ENCODE measurements at regions of chr1 and their contacts with region 1.

Region 1: GRCh38 chr1:54950369-54951163 is 29.9 kb upstream of the TMEM61 start:
- H3K4me3 ChIP-seq: no peak overlapping the region
- H3K27ac ChIP-seq: 0 out of 2 replicates have a peak overlapping the region, but pooled peaks have one; percentile 0
- H3K4me1 ChIP-seq: no peaks in the 10 kb centered on the region
- CTCF ChIP-seq: peak; percentile 78

Region 2: DNA sequence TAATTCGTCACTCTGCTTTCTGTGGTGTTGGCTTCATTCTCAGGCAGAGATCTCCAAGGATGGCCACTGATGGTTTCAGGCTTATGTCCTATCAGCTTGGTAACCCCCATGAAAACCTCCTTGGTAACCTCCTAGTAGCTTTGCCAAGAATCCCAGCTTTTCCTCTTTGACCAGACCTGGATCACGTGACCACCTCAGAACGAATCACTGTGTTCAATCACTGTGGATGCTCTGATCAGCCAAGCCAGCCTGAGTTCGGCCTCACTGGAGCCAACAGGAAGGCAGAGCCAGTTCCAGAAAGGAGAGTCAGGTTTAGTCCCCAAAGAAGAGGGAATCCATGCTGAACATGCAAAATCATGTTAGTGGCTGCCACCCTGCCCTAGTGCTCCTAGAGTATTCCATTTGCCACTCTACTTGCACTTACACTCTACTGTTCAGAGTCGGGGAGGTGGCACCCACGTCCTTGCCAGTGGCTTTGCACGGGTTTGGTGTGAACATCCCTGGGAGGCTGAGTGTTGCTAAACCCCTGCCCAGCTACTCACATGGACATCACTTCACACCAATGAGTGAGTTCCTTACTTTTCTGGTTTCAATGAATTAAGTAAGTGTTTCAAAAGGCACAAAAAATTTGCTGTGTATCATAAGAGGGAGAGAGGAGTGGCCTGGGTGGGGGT is 510.9 kb before region 1 on chr1:
- CTCF ChIA-PET with region 1: no interaction called
- POLR2A ChIA-PET with region 1: no interaction called
- H3K4me3 ChIP-seq: no peak overlapping the region
- H3K27ac ChIP-seq: no peak overlapping the region
- H3K4me1 ChIP-seq: no peaks in the 10 kb centered on the region
- CTCF ChIP-seq: no peak

Region 3: GRCh38 chr1:54965624-54966340 is 15.2 kb after region 1 on chr1:
- CTCF ChIA-PET with region 1: interaction called, 18 read pairs
- POLR2A ChIA-PET with region 1: no interaction called
- H3K4me3 ChIP-seq: no peak overlapping the region
- H3K27ac ChIP-seq: no peak overlapping the region
- H3K4me1 ChIP-seq: no peaks in the 10 kb centered on the region
- CTCF ChIP-seq: no peak

Region 4: DNA sequence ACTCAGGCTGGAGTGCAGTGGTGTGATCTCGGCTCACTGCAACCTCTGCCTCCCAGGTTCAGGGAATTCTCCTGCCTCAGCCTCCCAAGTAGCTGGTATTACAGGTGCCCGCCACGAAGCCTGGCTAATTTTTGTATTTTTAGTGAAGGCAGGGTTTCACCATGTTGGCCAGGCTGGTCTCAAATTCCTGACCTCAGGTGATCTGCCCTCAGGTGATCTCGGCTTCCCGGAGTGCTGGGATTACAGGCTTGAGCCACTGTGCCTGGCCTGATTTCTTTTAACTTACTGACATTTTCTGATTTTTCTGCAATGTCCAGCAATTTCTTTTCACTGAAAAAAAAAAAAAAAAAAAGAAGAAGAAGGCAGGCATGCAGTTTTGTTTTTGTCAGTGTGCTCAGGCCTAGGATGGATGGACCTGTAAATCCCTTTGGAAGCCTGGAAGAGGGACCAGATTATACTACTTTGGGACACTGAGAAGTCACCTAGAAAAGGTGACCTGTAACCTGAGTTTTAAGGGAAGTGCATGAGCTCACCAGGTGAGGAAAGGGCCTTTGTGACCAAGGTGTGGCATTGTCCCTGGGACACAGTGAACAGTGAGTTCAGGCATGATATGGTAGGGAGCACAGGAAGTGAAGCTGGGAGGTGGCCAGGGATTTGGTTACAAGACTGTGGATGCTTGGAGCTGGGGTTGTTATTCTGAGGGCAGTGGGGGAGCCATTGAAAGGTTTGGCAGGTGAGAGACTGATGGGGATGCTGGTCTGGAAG is 27.1 kb after region 1 on chr1:
- CTCF ChIA-PET with region 1: interaction called, 16 read pairs
- POLR2A ChIA-PET with region 1: interaction called, 3 read pairs
- H3K4me3 ChIP-seq: no peak overlapping the region
- H3K27ac ChIP-seq: no peak overlapping the region
- H3K4me1 ChIP-seq: no peaks in the 10 kb centered on the region; the same call in 1 of the 2 replicates
- CTCF ChIP-seq: no peak

Region 5: DNA sequence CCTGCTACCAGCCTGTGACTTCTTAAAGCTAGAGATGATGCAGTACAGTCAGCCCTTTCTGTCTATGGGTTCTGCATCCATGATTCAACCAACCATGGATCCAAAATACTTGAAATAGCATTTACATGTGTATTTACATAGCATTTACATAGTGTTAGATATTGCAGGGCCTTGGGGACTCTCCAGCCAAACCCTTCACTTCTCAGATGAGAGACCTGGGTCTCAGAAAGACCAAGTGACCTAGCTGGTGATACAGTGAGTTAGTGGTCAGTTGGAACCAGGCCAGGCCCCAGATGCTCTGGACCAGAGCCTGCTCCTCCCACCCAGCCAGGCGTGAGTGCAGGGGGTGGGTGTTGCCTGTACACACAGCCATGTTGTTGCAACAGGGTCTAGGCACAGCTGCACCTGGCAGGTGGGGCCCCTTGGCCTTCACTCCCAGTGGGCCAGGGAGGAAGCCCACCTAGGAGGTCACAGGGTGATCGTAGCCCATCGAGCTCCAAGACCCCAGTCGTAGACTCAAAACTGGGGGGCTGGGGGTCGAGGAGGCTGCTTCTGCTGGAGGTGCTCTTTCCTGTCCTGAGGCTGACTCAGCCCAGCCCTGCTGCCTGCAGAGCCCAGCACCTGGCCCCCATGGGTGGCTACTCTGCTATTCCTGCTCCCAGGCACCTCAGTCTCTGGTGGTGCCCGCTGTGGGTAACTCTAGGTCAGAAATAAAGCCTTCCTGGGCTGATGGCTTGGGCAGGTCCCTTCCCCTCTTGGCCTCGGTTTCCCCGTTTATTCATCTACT is 37.5 kb after region 1 on chr1:
- CTCF ChIA-PET with region 1: interaction called, 22 read pairs
- POLR2A ChIA-PET with region 1: no interaction called
- H3K4me3 ChIP-seq: no peak overlapping the region
- H3K27ac ChIP-seq: no peak overlapping the region
- H3K4me1 ChIP-seq: peaks cover 5% of the 10 kb centered on the region; the same call in 1 of the 2 replicates
- CTCF ChIP-seq: no peak

Region 6: GRCh38 chr1:54996359-54996868 is 45.8 kb after region 1 on chr1:
- CTCF ChIA-PET with region 1: interaction called, 172 read pairs
- POLR2A ChIA-PET with region 1: interaction called, 3 read pairs
- H3K4me3 ChIP-seq: no peak overlapping the region
- H3K27ac ChIP-seq: no peak overlapping the region
- H3K4me1 ChIP-seq: no peaks in the 10 kb centered on the region
- CTCF ChIP-seq: peak; percentile 84

Region 7: DNA sequence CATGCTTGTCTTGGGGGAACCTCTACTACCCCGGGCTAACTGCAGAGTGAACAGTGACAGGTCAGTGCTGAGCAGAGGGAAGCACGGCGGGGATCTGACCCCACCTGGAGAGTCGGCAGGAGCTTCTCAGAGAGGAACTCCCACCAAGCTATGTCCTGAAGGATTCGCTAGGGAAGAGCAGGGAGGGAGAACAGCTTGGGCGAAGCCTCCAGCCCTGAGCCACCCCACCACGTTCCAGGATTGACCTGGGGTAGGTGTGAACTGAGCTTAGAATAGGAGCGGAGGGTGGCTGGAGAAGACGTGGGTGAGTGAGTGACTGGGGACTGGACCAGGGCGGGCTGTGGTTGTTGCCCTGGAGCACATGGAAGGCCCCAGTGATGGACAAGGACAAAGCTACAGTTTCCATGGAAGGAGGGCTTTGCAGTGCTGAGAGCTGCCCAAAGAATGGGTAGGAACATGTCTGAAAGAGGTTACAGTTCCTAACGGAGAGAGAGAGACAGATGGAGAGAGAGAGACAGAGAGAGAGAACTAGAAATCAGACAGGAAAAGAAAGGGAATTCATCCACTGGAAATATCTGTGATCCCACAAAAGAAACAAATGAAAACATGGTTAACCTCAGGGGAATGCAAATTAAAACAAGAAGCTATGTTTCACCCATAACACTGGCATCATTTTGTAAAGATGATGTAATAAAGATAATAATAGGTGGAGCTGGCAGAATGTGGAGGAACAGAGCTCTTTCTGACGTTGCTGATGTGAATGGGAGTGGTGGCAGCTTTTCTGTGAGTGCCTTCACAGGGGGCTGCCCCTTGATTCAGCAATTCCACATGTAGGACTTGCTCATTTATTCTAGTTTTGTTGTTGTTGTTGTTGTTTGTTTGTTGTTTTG is 65.4 kb after region 1 on chr1:
- CTCF ChIA-PET with region 1: interaction called, 66 read pairs
- POLR2A ChIA-PET with region 1: interaction called, 6 read pairs
- H3K4me3 ChIP-seq: no peak overlapping the region
- H3K27ac ChIP-seq: no peak overlapping the region
- H3K4me1 ChIP-seq: no peaks in the 10 kb centered on the region
- CTCF ChIP-seq: no peak

Region 8: GRCh38 chr1:55021965-55022546 is 71.5 kb after region 1 on chr1:
- CTCF ChIA-PET with region 1: interaction called, 66 read pairs
- POLR2A ChIA-PET with region 1: interaction called, 6 read pairs
- H3K4me3 ChIP-seq: no peak overlapping the region
- H3K27ac ChIP-seq: no peak overlapping the region
- H3K4me1 ChIP-seq: no peaks in the 10 kb centered on the region
- CTCF ChIP-seq: peak; percentile 98